B cell (primary cell): ENCODE measurements at regions of chr1 and their contacts with region 1.

Region 1: DNA sequence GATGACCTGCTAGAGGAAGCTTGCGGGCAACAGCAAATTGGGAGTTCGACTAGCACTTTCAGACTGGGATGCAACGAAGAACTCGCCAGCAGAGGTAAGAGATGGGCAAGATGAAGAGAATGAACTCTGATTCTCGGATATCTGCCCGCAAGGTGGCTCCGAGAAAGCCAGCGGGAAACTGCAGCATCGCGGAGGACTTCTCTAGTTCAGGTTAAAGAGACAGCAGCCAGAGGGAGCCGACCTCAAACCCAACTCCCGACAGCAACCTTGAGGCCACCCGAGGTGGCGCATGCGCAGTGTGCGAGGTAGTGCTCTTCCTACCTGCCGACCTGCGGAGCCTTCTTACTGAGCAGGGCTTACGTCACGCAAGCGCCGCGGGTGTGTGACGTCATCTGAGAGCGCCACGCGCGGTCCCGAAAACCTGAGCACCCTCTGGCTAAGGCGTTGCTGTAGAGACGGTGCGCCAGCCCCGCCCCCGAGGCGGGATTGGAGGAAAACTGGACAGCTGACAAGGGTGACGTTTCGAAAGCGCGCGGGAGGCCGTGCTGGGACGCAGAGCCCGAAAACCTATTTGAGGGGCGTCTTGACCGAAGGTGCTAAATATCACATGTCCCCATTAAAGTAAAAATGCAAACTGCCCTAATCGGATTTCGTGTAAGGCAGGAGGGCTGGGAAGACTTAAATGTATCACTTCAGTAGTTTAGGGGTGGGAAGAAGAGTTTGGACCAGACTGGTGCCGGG is 110.5 kb upstream of the SLC25A33 start:
- DNase-seq: peak; percentile 100
- ATAC-seq: peak; percentile 74
- H3K4me3 ChIP-seq: peak overlapping the region; percentile 58 to 91 (median 77)
- H3K4me3 Mint-ChIP-seq: peak overlapping the region; percentile 99
- H3K27ac ChIP-seq: peak overlapping the region; percentile 74 to 85
- H3K27ac Mint-ChIP-seq: peak overlapping the region; percentile 98
- H3K4me1 ChIP-seq: peaks cover 48 to 56% of the 10 kb centered on the region in 2 donors
- H3K4me1 Mint-ChIP-seq: peaks cover 54% of the 10 kb centered on the region
- H3K27me3 ChIP-seq: no peaks in the 10 kb centered on the region
- H3K27me3 Mint-ChIP-seq: no peaks in the 10 kb centered on the region
- CTCF ChIP-seq: peak; percentile 19

Region 2: DNA sequence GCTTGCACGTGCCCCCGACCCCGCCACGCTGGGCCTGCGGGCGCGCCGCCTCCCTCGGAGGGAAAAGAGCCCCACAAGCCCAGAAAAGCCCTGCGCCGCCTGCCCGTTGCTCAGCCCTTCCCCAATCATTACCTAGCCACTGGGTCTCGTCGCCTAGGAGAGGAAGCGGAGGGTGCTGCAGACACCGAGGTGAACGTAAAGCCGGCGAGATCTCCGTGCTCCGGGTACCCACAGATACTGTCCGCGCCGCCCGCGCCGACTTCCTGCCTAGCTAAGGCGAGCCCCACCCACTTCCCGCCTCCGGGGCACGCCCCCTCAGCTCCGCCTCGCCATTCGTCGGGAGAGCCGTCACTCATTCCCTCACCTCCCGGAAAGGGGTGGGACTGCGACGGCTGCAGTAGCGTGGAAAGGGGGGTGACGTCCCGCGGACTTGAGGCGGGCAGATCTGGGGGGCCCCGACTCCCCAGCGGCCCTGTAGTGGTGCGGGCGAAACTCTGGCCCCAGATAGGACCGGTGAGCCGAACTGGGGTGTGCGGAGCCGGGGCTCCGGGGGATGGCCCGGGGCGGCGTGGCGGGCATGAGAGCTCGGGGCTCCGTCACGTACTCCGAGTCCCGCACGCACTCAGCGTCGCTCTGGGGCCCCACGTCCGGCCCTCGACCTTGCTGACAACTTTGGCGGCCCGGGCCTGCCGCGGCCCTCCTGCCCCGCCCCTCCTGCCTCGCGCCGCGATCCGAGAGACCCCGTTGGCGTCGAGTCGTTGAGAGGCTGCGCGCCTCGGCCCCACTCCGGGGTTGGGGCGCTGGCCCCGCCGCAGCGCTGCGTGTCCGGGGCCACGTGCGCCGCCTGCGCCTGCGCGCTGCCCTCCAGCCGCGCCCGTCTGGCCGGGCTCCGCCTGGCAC is 550.1 kb before region 1 on chr1 and contains the start of gene ENO1:
- CTCF ChIA-PET with region 1: no interaction called
- POLR2A ChIA-PET with region 1: no interaction called
- intact Hi-C with region 1: loop called (anchors 2 kb)
- DNase-seq: peak; percentile 100
- ATAC-seq: peak; percentile 87
- H3K4me3 ChIP-seq: peak within 1 kb of the TSS; percentile 78 to 94 (median 88)
- H3K4me3 Mint-ChIP-seq: peak within 1 kb of the TSS; percentile 95
- H3K27ac ChIP-seq: peak within 1 kb of the TSS; percentile 94 to 95
- H3K27ac Mint-ChIP-seq: peak within 1 kb of the TSS; percentile 97
- H3K4me1 ChIP-seq: peaks cover 31 to 36% of the 10 kb centered on the region in 2 donors
- H3K4me1 Mint-ChIP-seq: peaks cover 46% of the 10 kb centered on the region
- H3K27me3 ChIP-seq: no peaks in the 10 kb centered on the region
- H3K27me3 Mint-ChIP-seq: no peaks in the 10 kb centered on the region
- CTCF ChIP-seq: no peak
- total RNA-seq, gene ENO1: 223 and 237 TPM in 2 replicates

Region 3: DNA sequence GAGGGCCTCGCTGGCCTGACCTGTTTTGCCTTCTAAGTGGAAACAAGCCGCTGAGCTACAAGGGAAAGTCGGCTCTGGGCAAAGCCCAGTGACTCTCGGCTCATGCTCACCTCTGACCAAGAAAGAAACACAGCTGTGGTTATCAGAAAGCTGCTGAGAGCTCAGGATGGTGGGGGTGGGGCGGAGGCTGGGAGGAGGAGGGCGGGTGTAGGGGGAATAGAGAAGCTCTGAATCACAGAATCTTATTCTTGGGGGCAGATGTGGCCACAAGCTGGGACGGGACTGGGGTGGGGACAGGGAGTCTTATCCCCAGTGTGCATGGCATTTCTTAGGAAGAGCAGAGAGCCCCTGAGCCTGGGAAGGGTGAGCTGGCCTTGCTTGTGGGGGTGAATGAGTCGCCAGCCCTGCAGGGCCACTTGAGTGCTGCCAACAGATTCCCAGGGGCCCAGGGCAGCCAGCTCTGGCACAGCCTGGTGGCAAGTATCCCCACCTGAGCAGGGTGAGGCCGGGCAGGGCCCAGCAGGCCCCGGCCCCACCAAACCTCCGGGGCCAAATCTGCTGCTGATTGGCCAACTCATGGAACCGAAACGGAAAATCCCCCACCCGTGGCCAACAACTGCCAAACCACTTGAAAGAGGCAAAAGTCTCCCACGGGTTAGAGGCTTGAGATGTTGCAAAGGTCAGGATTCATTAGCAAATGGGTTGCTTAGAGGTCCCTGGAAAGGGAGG is 15.5 kb before region 1 on chr1:
- CTCF ChIA-PET with region 1: interaction called, 22 read pairs
- POLR2A ChIA-PET with region 1: interaction called, 66 read pairs
- intact Hi-C with region 1: loop called (anchors 1 kb)
- DNase-seq: peak; percentile 72
- ATAC-seq: peak; percentile 73
- H3K4me3 ChIP-seq: peak overlapping the region in 3 of 5 experiments; percentile 12 to 27 (median 12)
- H3K4me3 Mint-ChIP-seq: peak overlapping the region; percentile 49
- H3K27ac ChIP-seq: peak overlapping the region; percentile 41 to 67
- H3K27ac Mint-ChIP-seq: peak overlapping the region; percentile 85
- H3K4me1 ChIP-seq: peaks cover 35 to 59% of the 10 kb centered on the region in 2 donors
- H3K4me1 Mint-ChIP-seq: peaks cover 51% of the 10 kb centered on the region
- H3K27me3 ChIP-seq: no peaks in the 10 kb centered on the region
- H3K27me3 Mint-ChIP-seq: no peaks in the 10 kb centered on the region
- CTCF ChIP-seq: no peak

Region 4: GRCh38 chr1:9473032-9473792 is 44.4 kb after region 1 on chr1:
- CTCF ChIA-PET with region 1: no interaction called
- POLR2A ChIA-PET with region 1: no interaction called
- intact Hi-C with region 1: no loop called
- DNase-seq: no peak
- ATAC-seq: no peak
- H3K4me3 ChIP-seq: no peak overlapping the region
- H3K4me3 Mint-ChIP-seq: no peak overlapping the region
- H3K27ac ChIP-seq: no peak overlapping the region
- H3K27ac Mint-ChIP-seq: no peak overlapping the region
- H3K4me1 ChIP-seq: no peaks in the 10 kb centered on the region
- H3K4me1 Mint-ChIP-seq: no peaks in the 10 kb centered on the region
- H3K27me3 ChIP-seq: peaks cover 0 to 10% (median 2%) of the 10 kb centered on the region in 4 experiments
- H3K27me3 Mint-ChIP-seq: peaks cover 10% of the 10 kb centered on the region
- CTCF ChIP-seq: no peak

Region 5: DNA sequence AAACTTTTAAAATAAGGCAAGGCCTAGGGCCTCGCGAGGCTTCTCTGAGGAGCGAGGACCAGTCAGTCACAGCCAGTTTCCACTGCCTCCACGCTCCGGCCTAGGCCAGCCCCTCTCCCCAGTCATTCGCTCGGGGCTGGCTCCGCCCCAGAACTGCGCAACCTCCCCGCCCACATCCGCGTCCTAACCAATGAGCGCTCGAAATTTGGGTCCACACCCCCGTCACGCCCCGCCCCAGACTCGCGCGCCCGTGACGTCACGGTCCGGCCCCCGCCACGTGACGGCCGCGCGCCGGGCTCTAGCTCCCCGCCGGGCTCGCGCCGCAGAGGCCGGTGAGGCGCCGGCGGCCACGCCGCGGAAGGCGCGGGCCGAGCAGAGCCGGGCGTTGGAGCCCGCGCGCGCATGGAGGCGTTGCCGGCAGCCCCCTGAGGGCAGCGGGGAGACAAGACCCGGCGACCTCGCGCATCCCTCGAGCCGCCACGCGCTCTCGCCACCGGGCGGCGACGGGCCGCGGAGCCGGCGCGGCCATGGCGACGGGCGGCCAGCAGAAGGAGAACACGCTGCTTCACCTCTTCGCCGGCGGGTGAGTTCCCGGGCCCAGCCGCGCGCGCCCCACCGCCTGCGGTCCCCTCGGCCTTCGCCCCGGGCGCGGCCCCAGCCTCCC is 110.5 kb after region 1 on chr1 and contains the start of gene SLC25A33:
- CTCF ChIA-PET with region 1: no interaction called
- POLR2A ChIA-PET with region 1: no interaction called
- intact Hi-C with region 1: loop called (anchors 5 kb)
- DNase-seq: peak; percentile 99
- ATAC-seq: peak; percentile 97
- H3K4me3 ChIP-seq: peak within 1 kb of the TSS; percentile 24 to 80 (median 73)
- H3K4me3 Mint-ChIP-seq: peak within 1 kb of the TSS; percentile 97
- H3K27ac ChIP-seq: peak within 1 kb of the TSS; percentile 78 to 90
- H3K27ac Mint-ChIP-seq: peak within 1 kb of the TSS; percentile 98
- H3K4me1 ChIP-seq: peaks cover 12 to 16% of the 10 kb centered on the region in 2 donors
- H3K4me1 Mint-ChIP-seq: peaks cover 29% of the 10 kb centered on the region
- H3K27me3 ChIP-seq: no peaks in the 10 kb centered on the region
- H3K27me3 Mint-ChIP-seq: no peaks in the 10 kb centered on the region
- CTCF ChIP-seq: no peak
- total RNA-seq, gene SLC25A33: 5.0 and 5.9 TPM in 2 replicates

Region 6: GRCh38 chr1:10472220-10473144 is 1043.7 kb after region 1 on chr1 and contains the start of gene DFFA:
- CTCF ChIA-PET with region 1: no interaction called
- POLR2A ChIA-PET with region 1: no interaction called
- intact Hi-C with region 1: loop called (anchors 5 kb)
- DNase-seq: peak; percentile 94
- ATAC-seq: peak; percentile 81
- H3K4me3 ChIP-seq: peak within 1 kb of the TSS; percentile 58 to 84 (median 80)
- H3K4me3 Mint-ChIP-seq: peak within 1 kb of the TSS; percentile 87
- H3K27ac ChIP-seq: peak within 1 kb of the TSS; percentile 38 to 74
- H3K27ac Mint-ChIP-seq: peak within 1 kb of the TSS; percentile 88
- H3K4me1 ChIP-seq: peaks cover 34 to 44% of the 10 kb centered on the region in 2 donors
- H3K4me1 Mint-ChIP-seq: peaks cover 46% of the 10 kb centered on the region
- H3K27me3 ChIP-seq: no peaks in the 10 kb centered on the region
- H3K27me3 Mint-ChIP-seq: no peaks in the 10 kb centered on the region
- CTCF ChIP-seq: no peak
- total RNA-seq, gene DFFA: 28.2 and 30.7 TPM in 2 replicates

Region 7: GRCh38 chr1:10975567-10976326 is 1547.0 kb after region 1 on chr1:
- CTCF ChIA-PET with region 1: no interaction called
- POLR2A ChIA-PET with region 1: no interaction called
- intact Hi-C with region 1: no loop called
- DNase-seq: no peak
- ATAC-seq: no peak
- H3K4me3 ChIP-seq: no peak overlapping the region
- H3K4me3 Mint-ChIP-seq: no peak overlapping the region
- H3K27ac ChIP-seq: no peak overlapping the region
- H3K27ac Mint-ChIP-seq: no peak overlapping the region
- H3K4me1 ChIP-seq: no peaks in the 10 kb centered on the region
- H3K4me1 Mint-ChIP-seq: no peaks in the 10 kb centered on the region
- H3K27me3 ChIP-seq: peaks cover 0 to 4% (median 0%) of the 10 kb centered on the region in 4 experiments
- H3K27me3 Mint-ChIP-seq: peaks cover 19% of the 10 kb centered on the region
- CTCF ChIP-seq: no peak